Common myeloid progenitor, CD34-positive (primary cell): ENCODE measurements at regions of chr12 and their contacts with region 1.

Region 1: GRCh38 chr12:31267966-31268365 is 58.0 kb downstream of the SINHCAF start:
- DNase-seq: no peak
- H3K4me3 ChIP-seq: no peak overlapping the region
- H3K27ac ChIP-seq: no peak overlapping the region
- H3K4me1 ChIP-seq: no peaks in the 10 kb centered on the region
- H3K27me3 ChIP-seq: no peaks in the 10 kb centered on the region

Region 2: DNA sequence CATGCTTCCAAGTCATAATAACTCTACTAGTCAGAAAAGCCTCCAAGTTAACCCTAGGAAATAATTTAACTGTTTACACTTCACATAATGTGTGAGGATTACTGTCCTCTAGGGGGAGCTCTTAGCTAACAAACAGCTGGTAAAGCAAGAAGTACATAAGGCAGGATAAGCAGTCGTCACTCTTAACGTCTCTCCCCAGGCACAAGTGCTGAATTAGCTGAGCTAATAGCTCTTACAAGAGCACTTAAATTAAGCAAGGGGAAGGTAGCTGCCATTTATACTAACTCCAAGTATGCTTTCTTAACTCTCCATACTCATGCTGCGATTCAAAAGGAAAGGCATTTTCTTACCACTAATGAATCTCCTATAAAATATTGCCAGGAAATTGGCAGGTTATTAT is 420.7 kb before region 1 on chr12:
- CTCF ChIA-PET with region 1: interaction called, 10 read pairs
- POLR2A ChIA-PET with region 1: no interaction called
- DNase-seq: peak; percentile 65 to 82 (median 80)
- H3K4me3 ChIP-seq: no peak overlapping the region
- H3K27ac ChIP-seq: no peak overlapping the region
- H3K4me1 ChIP-seq: peaks cover 0 to 9% (median 1%) of the 10 kb centered on the region in 4 experiments
- H3K27me3 ChIP-seq: no peaks in the 10 kb centered on the region

Region 3: DNA sequence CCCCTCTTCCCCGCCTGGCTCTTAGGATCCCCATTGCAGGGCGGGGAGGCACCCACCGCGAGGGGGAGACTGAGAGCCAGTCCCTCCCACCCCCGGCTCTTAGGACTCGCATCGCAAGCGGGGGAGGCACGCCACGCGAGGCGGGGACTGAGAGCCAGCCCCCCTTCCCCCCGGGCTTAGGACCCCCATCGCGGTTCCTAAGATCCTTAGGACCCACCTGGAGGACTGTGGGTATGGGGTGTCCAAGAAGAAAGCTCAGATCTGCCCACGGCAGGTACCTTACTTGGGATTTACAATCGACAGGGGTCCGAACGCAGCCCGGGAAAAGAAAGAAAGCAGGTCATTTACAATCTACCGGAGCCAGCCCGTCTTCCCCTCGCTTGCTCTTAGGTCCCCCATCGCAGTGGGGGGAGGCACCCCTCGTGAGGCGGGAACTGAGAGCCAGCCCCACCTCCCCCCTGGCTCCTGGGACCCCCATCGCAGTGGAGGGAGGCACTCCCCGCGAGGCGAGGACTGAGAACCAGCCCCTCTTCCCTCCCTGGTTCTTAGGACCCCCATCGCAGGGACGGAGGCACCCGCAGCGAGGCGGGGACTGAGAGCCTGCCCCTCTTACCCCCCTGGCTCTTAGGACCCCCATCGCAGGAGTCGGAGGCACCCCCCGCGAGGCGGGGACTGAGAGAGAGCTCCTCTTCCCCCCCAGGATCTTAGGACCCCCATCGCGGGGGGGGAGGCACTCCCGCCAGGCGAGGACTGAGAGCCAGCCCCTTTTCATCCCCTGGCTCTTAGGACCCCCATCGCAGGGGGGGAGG is 150.6 kb before region 1 on chr12:
- CTCF ChIA-PET with region 1: interaction called, 10 read pairs
- POLR2A ChIA-PET with region 1: no interaction called
- DNase-seq: peak; percentile 61 to 80 (median 75)
- H3K4me3 ChIP-seq: peak overlapping the region in 6 of 7 experiments; percentile 58 to 89 (median 70)
- H3K27ac ChIP-seq: no peak overlapping the region
- H3K4me1 ChIP-seq: peaks cover 0 to 25% (median 21%) of the 10 kb centered on the region in 4 experiments
- H3K27me3 ChIP-seq: peaks cover 0 to 35% (median 0%) of the 10 kb centered on the region in 5 experiments

Region 4: GRCh38 chr12:31250179-31250578 is 17.8 kb before region 1 on chr12:
- CTCF ChIA-PET with region 1: interaction called, 35 read pairs
- POLR2A ChIA-PET with region 1: no interaction called
- DNase-seq: no peak
- H3K4me3 ChIP-seq: no peak overlapping the region
- H3K27ac ChIP-seq: no peak overlapping the region
- H3K4me1 ChIP-seq: no peaks in the 10 kb centered on the region
- H3K27me3 ChIP-seq: peaks cover 0 to 2% (median 0%) of the 10 kb centered on the region in 5 experiments

Region 5: DNA sequence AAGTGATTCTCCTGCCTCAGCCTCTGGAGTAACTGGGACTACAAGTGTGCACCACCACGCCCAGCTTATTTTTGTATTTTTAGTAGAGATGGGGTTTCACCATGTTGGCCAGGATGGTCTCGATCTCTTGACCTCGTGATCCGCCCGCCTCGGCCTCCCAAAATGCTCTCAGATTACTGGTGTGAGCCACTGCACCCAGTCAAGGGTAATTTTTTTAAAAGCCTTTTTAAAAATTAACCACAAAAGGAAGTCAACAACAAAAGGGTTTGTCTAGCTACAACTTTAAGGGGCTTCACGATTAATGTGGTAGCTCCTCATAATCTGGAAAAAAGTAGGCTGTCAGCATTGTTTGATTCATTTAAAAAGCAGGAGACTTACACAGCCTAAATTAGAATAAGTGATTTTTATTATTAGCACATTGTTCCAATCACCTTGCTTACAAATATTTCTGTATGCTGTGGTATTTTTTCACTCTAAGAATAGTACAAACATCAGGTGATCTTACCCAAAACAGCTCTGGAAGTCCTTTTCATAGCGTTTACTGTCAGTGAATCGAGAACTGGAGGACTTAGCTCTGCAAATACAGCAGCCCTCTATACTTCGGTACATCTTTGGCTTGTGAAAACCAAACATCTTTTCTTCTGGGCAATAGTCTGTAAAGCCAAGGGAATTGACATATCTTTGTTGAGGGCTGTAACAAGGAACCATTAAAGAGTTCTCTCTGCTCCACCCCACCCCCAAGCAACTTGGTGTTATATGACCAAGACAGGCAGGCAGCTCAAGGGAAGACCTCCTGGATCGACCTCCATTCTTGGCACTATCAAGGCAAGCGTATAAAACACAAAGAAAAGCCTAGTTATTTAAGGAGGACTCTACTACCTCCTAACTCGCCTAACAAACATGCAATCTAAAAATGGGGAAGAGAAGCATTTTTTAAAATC is 29.9 kb after region 1 on chr12:
- CTCF ChIA-PET with region 1: interaction called, 14 read pairs
- POLR2A ChIA-PET with region 1: no interaction called
- DNase-seq: no peak
- H3K4me3 ChIP-seq: no peak overlapping the region
- H3K27ac ChIP-seq: no peak overlapping the region
- H3K4me1 ChIP-seq: peaks cover 0 to 23% (median 7%) of the 10 kb centered on the region in 4 experiments
- H3K27me3 ChIP-seq: no peaks in the 10 kb centered on the region

Region 6: GRCh38 chr12:31362759-31363415 is 94.9 kb after region 1 on chr12:
- CTCF ChIA-PET with region 1: interaction called, 16 read pairs
- POLR2A ChIA-PET with region 1: no interaction called
- DNase-seq: peak; percentile 82 to 96 (median 93)
- H3K4me3 ChIP-seq: peak overlapping the region in 5 of 7 experiments; percentile 10 to 49 (median 47)
- H3K27ac ChIP-seq: peak overlapping the region in 1 of 2 experiments; percentile 50
- H3K4me1 ChIP-seq: peaks cover 4 to 24% (median 21%) of the 10 kb centered on the region in 4 experiments
- H3K27me3 ChIP-seq: no peaks in the 10 kb centered on the region